ENCODE measurements at regions of chr15 and their contacts with region 1.

Region 1: GRCh38 chr15:78108299-78109084 is 16.1 kb downstream of the SH2D7 start:
- DNase-seq: peak; percentile 88 to 91 (median 91)
- ATAC-seq: peak; percentile 86
- H3K4me3 ChIP-seq: no peak overlapping the region
- H3K4me1 ChIP-seq: peaks cover 13% of the 10 kb centered on the region
- CTCF ChIP-seq: peak; percentile 86

Region 2: DNA sequence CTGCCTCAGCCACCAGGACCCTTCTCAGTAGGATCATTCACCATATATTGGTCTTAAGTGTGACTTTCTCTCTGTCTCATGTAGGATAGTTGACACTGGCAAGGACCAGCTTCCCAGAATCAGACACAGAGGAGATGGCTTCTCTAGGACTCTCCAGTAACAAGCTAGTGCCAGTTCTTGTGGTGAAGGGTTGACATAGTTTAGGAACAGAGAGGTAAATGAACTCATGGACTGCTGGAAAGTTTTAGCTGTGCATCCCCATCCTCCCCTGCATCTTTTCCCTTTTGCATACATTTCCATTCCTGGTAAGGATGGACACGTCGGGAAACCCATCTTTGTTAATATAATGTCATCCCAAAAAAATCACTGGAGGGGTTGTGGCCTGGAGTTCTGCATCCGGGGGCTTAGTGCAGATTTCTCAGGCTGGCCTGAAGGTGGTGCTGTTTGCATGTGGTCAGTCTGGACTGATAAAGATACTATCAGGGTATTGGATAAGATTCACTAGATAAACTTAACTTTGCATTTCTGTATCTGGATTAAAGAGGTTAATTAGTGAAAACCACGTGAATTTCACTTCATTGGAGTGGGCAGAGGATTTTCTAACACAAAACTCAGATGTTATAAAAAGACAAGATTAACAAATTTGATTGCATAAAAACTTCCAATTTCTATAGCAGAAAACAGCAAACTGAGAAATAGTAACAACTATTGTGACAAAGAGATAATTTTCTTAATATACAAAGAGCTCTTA is 141.8 kb before region 1 on chr15:
- intact Hi-C with region 1: loop called (anchors 5 to 10 kb)
- DNase-seq: peak in 2 of 3 donors; percentile 52 to 54
- ATAC-seq: peak; percentile 82
- H3K4me3 ChIP-seq: no peak overlapping the region
- H3K4me1 ChIP-seq: no peaks in the 10 kb centered on the region
- CTCF ChIP-seq: peak; percentile 73

Region 3: GRCh38 chr15:78000091-78000926 is 108.2 kb before region 1 on chr15:
- intact Hi-C with region 1: loop called in 1 of 2 experiments (anchors 5 kb)
- DNase-seq: peak; percentile 93 to 94 (median 93)
- ATAC-seq: peak; percentile 97
- H3K4me3 ChIP-seq: no peak overlapping the region
- H3K4me1 ChIP-seq: no peaks in the 10 kb centered on the region
- CTCF ChIP-seq: peak; percentile 75

Region 4: DNA sequence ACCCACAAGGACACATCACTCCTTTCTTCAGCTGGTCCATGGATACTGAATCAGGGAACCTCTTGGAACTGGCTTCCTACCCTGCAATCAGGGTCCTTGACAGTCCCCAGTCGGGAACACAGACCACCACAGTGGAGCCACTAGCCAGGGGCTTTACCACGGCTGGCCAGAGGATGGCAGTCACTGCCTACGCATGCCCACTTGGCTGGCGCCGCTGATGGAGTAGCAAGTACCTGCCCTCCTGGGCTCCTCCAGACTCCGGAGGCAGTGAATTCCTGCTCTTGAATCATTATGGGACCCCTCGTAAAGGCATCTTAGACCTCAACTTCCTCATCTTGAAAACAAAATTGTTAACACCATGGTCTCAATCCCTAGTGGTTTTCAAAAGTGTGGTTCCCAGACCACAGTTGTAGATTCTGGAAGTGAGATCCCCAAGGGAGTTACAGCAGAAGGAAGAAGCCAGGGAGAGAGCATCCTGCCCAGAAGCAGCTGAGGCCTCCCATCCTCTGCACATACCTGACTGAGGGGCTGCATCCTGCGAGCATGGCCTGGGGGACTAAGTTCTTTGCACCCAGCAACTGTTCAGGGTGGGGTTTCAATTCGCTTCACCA is 200.0 kb after region 1 on chr15:
- intact Hi-C with region 1: no loop called
- DNase-seq: peak in 2 of 3 donors; percentile 83 to 84
- ATAC-seq: peak; percentile 91
- H3K4me3 ChIP-seq: no peak overlapping the region
- H3K4me1 ChIP-seq: peaks cover 4% of the 10 kb centered on the region
- CTCF ChIP-seq: peak; percentile 60

Region 5: GRCh38 chr15:78402061-78402610 is 293.6 kb after region 1 on chr15:
- intact Hi-C with region 1: no loop called
- DNase-seq: no peak
- ATAC-seq: no peak
- H3K4me3 ChIP-seq: no peak overlapping the region
- H3K4me1 ChIP-seq: peaks cover 5% of the 10 kb centered on the region
- CTCF ChIP-seq: no peak

Measured in mucosa of descending colon (tissue), 3 donors.